Caco-2 (cell line): ENCODE measurements at regions of chr3 and their contacts with region 1.

Region 1: GRCh38 chr3:136022529-136023263 is 57.2 kb downstream of the PPP2R3A start:
- DNase-seq: peak in 1 of 2 experiments; percentile 18
- H3K4me3 ChIP-seq: no peak overlapping the region
- H3K4me3 Mint-ChIP-seq: peak overlapping the region; percentile 65
- H3K27ac Mint-ChIP-seq: peak overlapping the region; percentile 59
- H3K4me1 ChIP-seq: peaks cover 18% of the 10 kb centered on the region
- H3K4me1 Mint-ChIP-seq: peaks cover 16% of the 10 kb centered on the region
- H3K27me3 ChIP-seq: no peaks in the 10 kb centered on the region
- H3K27me3 Mint-ChIP-seq: no peaks in the 10 kb centered on the region
- CTCF ChIP-seq: no peak

Region 2: DNA sequence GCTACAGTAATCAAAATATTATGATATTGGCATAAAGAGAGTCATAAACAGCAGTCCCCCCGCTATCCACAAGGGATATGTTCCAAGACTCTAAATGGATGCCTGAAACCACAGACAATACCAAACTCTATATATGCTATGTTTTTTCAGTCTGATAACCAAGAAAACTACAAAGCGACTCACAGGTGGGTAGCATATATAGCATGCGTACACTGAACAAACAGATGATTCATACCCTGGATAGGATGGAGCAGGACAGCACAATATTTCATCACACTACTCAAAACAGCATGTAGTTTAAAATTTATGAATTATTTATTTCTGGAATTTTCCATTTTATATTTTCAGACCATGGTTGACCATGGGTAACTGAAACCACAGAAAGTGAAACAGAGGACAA is 144.2 kb before region 1 on chr3:
- CTCF ChIA-PET with region 1: no interaction called
- POLR2A ChIA-PET with region 1: no interaction called
- intact Hi-C with region 1: no loop called
- DNase-seq: no peak
- H3K4me3 ChIP-seq: no peak overlapping the region
- H3K4me3 Mint-ChIP-seq: no peak overlapping the region
- H3K27ac Mint-ChIP-seq: no peak overlapping the region
- H3K4me1 ChIP-seq: no peaks in the 10 kb centered on the region
- H3K4me1 Mint-ChIP-seq: no peaks in the 10 kb centered on the region
- H3K27me3 ChIP-seq: no peaks in the 10 kb centered on the region; the same call in 1 of the 2 replicates
- H3K27me3 Mint-ChIP-seq: peaks cover 15% of the 10 kb centered on the region
- CTCF ChIP-seq: no peak

Region 3: GRCh38 chr3:135994708-135995337 is 27.9 kb before region 1 on chr3:
- CTCF ChIA-PET with region 1: no interaction called
- POLR2A ChIA-PET with region 1: no interaction called
- intact Hi-C with region 1: loop called (anchors 2 kb)
- DNase-seq: peak; percentile 44 to 50
- H3K4me3 ChIP-seq: no peak overlapping the region
- H3K4me3 Mint-ChIP-seq: peak overlapping the region; percentile 41
- H3K27ac Mint-ChIP-seq: peak overlapping the region; percentile 49
- H3K4me1 ChIP-seq: peaks cover 54% of the 10 kb centered on the region
- H3K4me1 Mint-ChIP-seq: peaks cover 19% of the 10 kb centered on the region
- H3K27me3 ChIP-seq: no peaks in the 10 kb centered on the region
- H3K27me3 Mint-ChIP-seq: no peaks in the 10 kb centered on the region
- CTCF ChIP-seq: no peak